Activated CD4-positive, alpha-beta memory T cell treated with anti-CD3 and anti-CD28 coated beads for 36 hours (primary cell): ENCODE measurements at regions of chr12 and their contacts with region 1.

Region 1: DNA sequence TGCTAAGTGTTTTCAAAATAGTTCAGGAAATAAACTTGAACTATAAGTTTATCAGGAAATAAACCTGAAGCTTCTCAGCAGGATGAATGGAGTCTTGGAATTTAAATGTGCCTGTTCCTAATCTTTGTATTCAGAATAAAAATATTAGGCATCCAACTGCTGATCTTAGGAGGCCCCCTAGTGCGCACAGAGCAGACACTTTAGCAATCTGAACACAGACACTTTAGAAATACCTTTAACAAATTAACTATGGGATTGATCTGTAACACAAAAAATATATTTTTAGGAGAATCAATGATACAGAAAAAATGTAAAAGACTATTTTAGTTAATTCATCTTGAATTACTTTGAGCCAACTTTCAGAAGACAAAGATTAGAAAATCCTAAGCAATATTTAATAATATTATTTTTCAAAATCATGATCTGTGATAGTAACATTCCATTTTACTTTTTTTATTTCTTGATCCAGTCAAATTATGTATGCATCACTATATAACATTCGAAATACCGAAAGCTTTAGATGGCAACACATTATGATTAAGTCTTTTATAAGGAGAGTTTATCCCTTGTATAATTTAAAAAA is 80.9 kb downstream of the SLC41A2 start:
- DNase-seq: peak; percentile 40
- H3K4me3 Mint-ChIP-seq: no peak overlapping the region
- H3K27ac Mint-ChIP-seq: no peak overlapping the region
- H3K4me1 Mint-ChIP-seq: peaks cover 3% of the 10 kb centered on the region
- H3K27me3 Mint-ChIP-seq: no peaks in the 10 kb centered on the region

Region 2: DNA sequence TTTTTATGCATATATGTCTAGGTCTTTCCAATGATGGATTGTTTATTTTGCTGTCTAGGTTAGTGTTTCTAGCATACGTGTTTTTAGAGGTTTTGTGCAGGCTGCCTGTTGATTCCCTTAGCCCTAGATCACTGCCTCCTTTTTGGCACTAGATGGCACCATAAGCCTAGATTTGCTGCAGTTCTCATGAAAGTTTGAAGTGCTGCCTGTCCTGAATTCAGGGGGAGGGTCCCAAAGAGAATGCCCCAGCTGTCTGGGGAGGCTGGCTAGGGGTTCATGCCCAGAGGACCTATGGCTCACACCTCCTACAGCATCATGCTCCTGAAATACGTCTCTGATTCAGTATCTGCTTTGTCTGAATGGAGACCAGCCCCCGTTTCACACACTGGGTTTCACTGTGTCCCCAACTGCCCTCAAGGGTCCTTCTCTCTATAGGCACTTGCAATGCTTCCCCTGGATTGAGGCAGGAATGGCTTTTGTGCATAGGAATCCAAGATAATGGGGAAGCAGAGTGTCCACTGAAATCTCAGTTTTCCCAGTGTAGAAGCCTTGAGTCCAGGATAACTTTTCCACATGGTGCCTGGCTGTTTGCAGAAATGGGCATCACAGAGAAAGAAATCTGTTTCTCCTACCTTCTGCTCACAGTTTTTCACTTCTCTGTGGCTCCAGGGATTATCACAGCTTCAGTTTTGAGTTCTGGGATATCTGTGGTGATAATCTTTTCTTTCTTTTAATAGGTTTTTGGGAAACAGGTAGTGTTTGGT is 675.8 kb before region 1 on chr12:
- CTCF ChIA-PET with region 1: no interaction called
- POLR2A ChIA-PET with region 1: no interaction called
- intact Hi-C with region 1: loop called (anchors 1 kb)
- DNase-seq: peak; percentile 50
- H3K4me3 Mint-ChIP-seq: no peak overlapping the region
- H3K27ac Mint-ChIP-seq: no peak overlapping the region
- H3K4me1 Mint-ChIP-seq: no peaks in the 10 kb centered on the region
- H3K27me3 Mint-ChIP-seq: peaks cover 8% of the 10 kb centered on the region